ENCODE measurements at regions of chr2 and their contacts with region 1.

Region 1: GRCh38 chr2:240369801-240370585 is 65.5 kb upstream of the GPC1 start:
- DNase-seq: peak; percentile 24 to 92
- H3K4me3 ChIP-seq: peak overlapping the region in 1 of 2 donors; percentile 14
- H3K27ac ChIP-seq: peak overlapping the region; percentile 90 to 92
- H3K4me1 ChIP-seq: peaks cover 8 to 48% of the 10 kb centered on the region in 2 donors
- H3K27me3 ChIP-seq: no peaks in the 10 kb centered on the region
- CTCF ChIP-seq: no peak

Region 2: DNA sequence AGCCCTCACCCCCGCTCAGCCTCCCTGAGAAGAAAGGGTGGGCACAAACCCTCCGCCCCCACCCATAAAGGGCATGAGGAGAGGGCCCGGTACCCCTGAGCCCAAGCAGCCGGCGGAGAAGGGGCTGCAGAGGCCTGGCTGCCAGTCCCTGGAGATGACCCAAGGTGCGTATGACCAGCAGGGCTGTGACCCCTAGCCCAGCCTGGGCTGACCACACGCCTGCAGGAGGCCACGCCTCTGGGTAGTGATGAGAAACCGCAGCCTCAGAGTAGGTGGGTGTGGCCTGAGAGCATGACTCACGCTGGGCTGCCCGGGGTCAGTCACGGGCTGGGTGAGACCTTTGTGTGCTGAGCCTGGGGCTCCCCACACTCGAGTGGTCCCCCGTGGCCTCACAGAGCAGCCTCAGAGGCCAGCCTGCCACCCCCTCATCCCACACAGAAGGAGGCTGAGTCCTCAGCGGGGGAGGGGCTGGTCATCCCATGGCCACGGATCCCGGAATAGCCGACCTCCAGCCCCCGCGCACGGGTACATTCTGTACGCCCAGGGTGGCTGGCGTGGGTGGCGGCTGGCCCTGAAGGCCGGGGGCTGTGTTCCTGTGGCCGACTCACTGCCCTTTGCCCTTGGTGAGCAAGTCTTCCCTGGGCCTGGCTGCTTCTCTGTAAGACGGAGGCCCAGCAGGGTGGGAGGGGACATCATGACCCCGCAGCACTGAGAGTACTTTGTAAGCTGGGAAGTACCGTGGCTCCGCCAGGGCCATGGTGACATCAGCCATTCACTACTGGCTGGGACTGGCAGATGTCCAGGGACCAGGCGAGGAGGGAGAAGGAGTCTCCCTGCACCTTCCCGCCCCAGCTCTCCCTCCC is 118.8 kb before region 1 on chr2:
- intact Hi-C with region 1: loop called (anchors 2 kb)
- DNase-seq: peak; percentile 93 to 98
- H3K4me3 ChIP-seq: peak overlapping the region in 1 of 2 donors; percentile 19
- H3K27ac ChIP-seq: peak overlapping the region; percentile 87 to 93
- H3K4me1 ChIP-seq: peaks cover 14 to 22% of the 10 kb centered on the region in 2 donors
- H3K27me3 ChIP-seq: no peaks in the 10 kb centered on the region
- CTCF ChIP-seq: no peak

Region 3: GRCh38 chr2:240259201-240259923 is 110.6 kb before region 1 on chr2:
- intact Hi-C with region 1: loop called (anchors 2 kb)
- DNase-seq: peak; percentile 76 to 97
- H3K4me3 ChIP-seq: peak overlapping the region in 1 of 2 donors; percentile 8
- H3K27ac ChIP-seq: peak overlapping the region; percentile 94 to 98
- H3K4me1 ChIP-seq: peaks cover 18 to 26% of the 10 kb centered on the region in 2 donors
- H3K27me3 ChIP-seq: no peaks in the 10 kb centered on the region
- CTCF ChIP-seq: peak in 2 of 3 experiments; percentile 23 to 46

Region 4: DNA sequence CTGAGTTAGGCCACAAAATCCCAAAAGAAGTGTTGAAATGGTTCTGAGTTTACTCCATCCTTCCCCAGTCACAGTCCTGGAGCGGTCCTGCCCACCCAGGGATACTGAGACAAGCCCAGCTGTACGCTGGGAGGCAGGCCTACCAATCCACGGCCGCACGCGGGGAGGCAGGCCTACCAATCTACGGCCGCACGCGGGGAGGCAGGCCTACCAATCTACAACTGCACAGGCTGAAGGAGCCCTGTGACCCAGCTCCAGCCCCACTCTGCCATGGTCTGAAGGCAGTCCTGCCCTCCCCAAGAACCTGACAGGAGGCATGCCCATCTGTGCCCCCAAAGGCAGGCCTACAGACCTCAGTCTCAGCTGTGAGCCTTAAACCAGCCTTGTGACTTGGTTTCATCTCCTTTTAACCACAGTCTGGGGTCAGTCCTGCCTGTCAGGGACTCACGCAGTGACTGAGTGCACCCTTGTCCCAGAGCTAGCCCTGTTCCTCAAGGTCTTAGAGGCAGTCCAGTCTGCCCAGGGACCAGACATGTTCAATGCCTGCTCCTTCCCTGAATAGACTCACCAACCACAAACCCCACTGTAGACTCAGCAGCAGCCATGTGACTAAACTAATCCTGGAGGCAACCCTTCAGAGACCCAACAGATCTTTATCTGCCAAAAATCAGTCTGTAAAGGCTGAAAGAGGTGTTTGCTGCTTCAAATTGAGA is 102.2 kb after region 1 on chr2:
- intact Hi-C with region 1: no loop called
- DNase-seq: no peak
- H3K4me3 ChIP-seq: no peak overlapping the region
- H3K27ac ChIP-seq: no peak overlapping the region
- H3K4me1 ChIP-seq: no peaks in the 10 kb centered on the region
- H3K27me3 ChIP-seq: no peaks in the 10 kb centered on the region
- CTCF ChIP-seq: no peak

Region 5: DNA sequence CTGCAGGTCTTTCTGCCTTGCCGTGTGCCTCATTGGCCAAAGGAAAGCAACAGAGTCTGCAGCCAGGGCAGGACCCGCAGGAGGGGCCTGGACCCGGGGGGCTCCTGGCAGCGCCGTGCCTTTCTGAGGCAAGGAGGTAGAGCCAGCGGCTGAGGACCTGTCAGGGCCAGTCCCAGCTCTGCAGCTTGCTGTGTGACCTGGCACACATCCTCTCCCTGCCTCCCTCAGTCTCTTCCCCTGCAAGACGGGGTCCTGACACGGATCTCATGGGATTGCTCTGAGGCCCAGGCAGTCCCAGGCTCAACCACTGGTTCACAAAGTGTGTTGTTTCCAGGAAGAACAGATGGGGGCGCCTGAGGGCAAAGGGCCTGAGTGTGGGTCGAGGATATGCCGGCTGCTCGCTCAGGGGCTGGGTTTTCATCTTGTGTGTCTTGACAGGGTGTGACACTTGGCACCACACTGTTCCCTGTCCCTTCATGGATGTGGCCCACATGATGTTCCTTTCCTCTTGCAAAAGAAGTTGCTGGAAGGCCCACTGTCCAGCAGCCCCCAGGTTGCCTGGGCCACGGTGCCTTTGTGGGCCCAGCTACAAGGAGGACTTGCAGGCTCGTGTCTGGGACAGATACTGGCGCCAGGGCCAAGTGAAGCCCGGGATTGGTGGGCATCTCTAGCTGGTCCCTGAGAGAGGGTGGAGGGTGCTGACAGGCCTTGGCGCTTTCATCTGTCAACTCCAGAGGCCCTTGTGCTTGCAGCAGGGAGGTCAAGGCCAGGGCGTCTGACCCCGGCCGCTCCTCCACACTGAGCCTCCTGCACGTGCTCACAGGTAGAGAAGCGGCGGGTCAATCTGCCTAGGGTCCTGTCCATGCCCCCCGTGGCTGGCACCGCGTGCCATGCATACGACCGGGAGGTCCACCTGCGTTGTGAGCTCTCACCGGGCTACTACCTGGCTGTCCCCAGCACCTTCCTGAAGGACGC is 225.8 kb after region 1 on chr2:
- intact Hi-C with region 1: no loop called
- DNase-seq: peak; percentile 7 to 63
- H3K4me3 ChIP-seq: peak overlapping the region in 1 of 2 donors; percentile 35
- H3K27ac ChIP-seq: no peak overlapping the region
- H3K4me1 ChIP-seq: peaks cover 9 to 20% of the 10 kb centered on the region in 2 donors
- H3K27me3 ChIP-seq: no peaks in the 10 kb centered on the region
- CTCF ChIP-seq: peak in 1 of 3 experiments; percentile 29

Measured in ascending aorta (tissue), 2 donors.